Transverse colon (tissue), 4 donors: ENCODE measurements at regions of chr5 and their contacts with region 1.

Region 1: GRCh38 chr5:57166276-57166675 is 7.6 kb upstream of the GPBP1 start:
- DNase-seq: no peak
- H3K4me3 ChIP-seq: no peak overlapping the region
- H3K27ac ChIP-seq: no peak overlapping the region
- H3K4me1 ChIP-seq: no peaks in the 10 kb centered on the region
- H3K27me3 ChIP-seq: no peaks in the 10 kb centered on the region
- CTCF ChIP-seq: no peak
- EP300 ChIP-seq: no peak
- POLR2A ChIP-seq: no peak

Region 2: GRCh38 chr5:57111993-57112392 is 54.3 kb before region 1 on chr5:
- in situ Hi-C with region 1: no loop called
- intact Hi-C with region 1: loop called (anchors 2 kb)
- DNase-seq: peak; percentile 28
- H3K4me3 ChIP-seq: no peak overlapping the region
- H3K27ac ChIP-seq: no peak overlapping the region
- H3K4me1 ChIP-seq: peaks cover 0 to 7% (median 3%) of the 10 kb centered on the region in 4 donors
- H3K27me3 ChIP-seq: no peaks in the 10 kb centered on the region
- CTCF ChIP-seq: no peak
- EP300 ChIP-seq: no peak
- POLR2A ChIP-seq: no peak

Region 3: GRCh38 chr5:57791875-57792274 is 625.6 kb after region 1 on chr5:
- in situ Hi-C with region 1: no loop called
- intact Hi-C with region 1: loop called (anchors 5 kb)
- DNase-seq: no peak
- H3K4me3 ChIP-seq: no peak overlapping the region
- H3K27ac ChIP-seq: no peak overlapping the region
- H3K4me1 ChIP-seq: no peaks in the 10 kb centered on the region
- H3K27me3 ChIP-seq: no peaks in the 10 kb centered on the region
- CTCF ChIP-seq: no peak
- EP300 ChIP-seq: no peak
- POLR2A ChIP-seq: no peak